SK-N-SH (cell line): ENCODE measurements at regions of chr6 and their contacts with region 1.

Region 1: DNA sequence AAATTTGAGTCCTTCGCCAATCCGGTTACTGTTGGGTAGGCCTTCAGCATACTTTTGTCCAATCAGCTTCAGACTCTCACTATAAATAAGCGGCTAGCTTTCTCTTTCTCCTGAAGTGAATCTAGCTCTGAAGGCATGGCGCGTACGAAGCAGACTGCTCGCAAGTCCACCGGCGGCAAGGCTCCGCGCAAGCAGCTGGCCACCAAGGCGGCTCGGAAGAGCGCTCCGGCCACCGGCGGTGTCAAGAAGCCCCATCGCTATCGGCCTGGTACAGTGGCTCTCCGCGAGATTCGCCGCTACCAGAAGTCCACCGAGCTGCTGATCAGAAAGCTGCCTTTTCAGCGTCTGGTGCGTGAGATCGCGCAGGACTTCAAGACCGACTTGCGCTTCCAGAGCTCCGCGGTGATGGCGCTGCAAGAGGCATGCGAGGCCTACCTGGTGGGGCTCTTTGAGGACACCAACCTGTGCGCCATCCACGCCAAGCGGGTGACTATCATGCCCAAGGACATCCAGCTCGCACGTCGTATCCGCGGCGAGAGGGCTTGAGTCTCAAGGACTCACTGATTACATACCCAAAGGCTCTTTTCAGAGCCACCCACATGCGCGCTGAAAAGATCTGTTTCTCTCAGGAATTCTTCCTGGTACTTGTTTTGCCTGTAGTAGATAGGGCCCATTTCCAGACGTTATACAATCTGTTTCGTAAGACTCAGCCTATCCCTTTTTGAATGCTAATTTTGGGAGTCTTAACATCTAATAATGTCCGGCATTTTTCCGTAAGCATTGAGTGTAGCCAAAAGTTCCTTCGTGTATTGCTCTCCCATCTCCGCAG is 102.0 kb downstream of the OR2B2 start:
- DNase-seq: peak; percentile 74
- H3K4me3 ChIP-seq: peak overlapping the region; percentile 69 to 83
- H3K27ac ChIP-seq: peak overlapping the region; percentile 80 to 99
- H3K4me1 ChIP-seq: peaks cover 3 to 12% of the 10 kb centered on the region in 2 experiments; a peak in 3 of 4 replicates
- H3K27me3 ChIP-seq: no peaks in the 10 kb centered on the region
- CTCF ChIP-seq: peak; percentile 31
- EP300 ChIP-seq: peak in 1 of 2 experiments; percentile 61; a peak in 1 of 4 replicates
- RAD21 ChIP-seq: no peak

Region 2: DNA sequence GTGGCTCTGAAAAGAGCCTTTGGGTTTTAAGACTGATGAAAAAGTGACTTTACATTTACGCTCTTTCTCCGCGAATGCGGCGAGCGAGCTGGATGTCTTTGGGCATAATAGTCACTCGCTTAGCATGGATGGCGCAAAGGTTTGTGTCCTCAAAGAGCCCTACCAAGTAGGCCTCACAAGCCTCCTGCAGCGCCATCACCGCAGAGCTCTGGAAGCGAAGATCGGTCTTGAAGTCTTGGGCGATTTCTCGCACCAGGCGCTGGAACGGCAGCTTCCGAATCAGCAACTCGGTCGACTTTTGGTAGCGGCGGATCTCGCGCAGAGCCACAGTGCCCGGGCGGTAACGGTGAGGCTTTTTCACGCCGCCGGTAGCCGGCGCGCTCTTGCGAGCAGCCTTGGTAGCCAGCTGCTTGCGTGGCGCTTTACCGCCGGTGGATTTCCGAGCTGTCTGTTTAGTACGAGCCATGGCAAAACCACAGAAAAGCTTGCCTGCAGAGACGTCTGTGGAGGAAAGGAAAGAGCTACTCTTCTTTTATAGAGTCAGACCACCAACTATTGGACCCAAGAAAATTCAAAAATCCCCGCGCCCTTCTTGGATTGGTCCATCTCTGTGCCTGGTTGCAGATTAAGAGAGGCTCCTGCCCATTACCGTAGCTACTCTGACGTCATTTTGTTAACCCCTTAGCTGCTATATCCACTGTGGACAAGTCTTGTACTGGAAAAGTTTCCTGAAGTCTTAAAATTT is 1778.4 kb before region 1 on chr6:
- CTCF ChIA-PET with region 1: no interaction called
- POLR2A ChIA-PET with region 1: interaction called, 10 read pairs
- DNase-seq: peak; percentile 89
- H3K4me3 ChIP-seq: peak overlapping the region; percentile 73 to 84
- H3K27ac ChIP-seq: peak overlapping the region; percentile 92 to 99
- H3K4me1 ChIP-seq: peaks cover 10 to 23% of the 10 kb centered on the region in 2 experiments; a peak in 3 of 4 replicates
- H3K27me3 ChIP-seq: no peaks in the 10 kb centered on the region
- CTCF ChIP-seq: peak; percentile 30
- EP300 ChIP-seq: peak; percentile 52 to 61; a peak in 2 of 4 replicates
- RAD21 ChIP-seq: no peak

Region 3: DNA sequence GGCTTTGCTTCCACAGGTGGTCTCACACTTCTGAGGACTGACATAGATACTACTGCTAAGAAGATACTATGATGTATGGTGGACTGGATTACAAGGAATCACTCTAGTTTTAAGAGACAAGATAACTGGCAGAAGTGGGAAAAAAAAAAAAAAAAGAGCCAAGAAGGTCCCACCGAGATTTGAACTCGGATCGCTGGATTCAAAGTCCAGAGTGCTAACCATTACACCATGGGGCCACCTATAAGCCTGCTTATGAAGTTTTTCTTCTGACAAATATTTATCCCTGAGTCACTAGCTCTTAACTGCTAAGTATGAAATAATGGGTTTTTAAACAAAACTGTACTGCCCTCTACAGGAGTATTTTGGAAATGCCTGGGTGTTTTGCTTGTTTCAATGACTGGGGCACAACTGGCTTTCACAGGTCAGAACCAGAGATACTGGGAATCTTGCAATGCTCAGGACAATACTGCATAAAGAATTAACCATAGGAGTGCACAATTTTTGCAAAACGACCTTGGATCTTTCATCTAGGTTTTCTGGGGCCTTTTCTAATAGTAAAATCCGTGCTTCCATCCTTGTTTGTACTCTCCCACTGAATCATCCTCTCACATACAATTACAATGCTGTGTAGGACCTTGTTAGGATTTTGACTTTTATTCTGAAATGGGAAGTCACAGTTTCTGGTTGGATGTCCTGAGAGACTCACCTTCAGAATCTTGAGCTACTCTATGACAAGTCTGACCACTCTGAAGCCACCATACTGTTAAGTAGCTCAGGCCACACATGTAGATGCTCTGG is 14.3 kb before region 1 on chr6:
- CTCF ChIA-PET with region 1: interaction called, 33 read pairs
- POLR2A ChIA-PET with region 1: interaction called, 9 read pairs
- DNase-seq: peak; percentile 53
- H3K4me3 ChIP-seq: no peak overlapping the region; a peak in 1 of 4 replicates
- H3K27ac ChIP-seq: peak overlapping the region in 1 of 2 experiments; percentile 28; a peak in 1 of 4 replicates
- H3K4me1 ChIP-seq: peaks cover 0 to 12% of the 10 kb centered on the region in 2 experiments; a peak in 2 of 4 replicates
- H3K27me3 ChIP-seq: no peaks in the 10 kb centered on the region
- CTCF ChIP-seq: peak; percentile 81
- EP300 ChIP-seq: no peak
- RAD21 ChIP-seq: peak; percentile 68

Region 4: GRCh38 chr6:27838058-27838944 is 28.1 kb after region 1 on chr6:
- CTCF ChIA-PET with region 1: interaction called, 3 read pairs
- POLR2A ChIA-PET with region 1: interaction called, 33 read pairs
- DNase-seq: peak; percentile 84
- H3K4me3 ChIP-seq: peak overlapping the region; percentile 83 to 84
- H3K27ac ChIP-seq: peak overlapping the region; percentile 97 to 99
- H3K4me1 ChIP-seq: peaks cover 0 to 11% of the 10 kb centered on the region in 2 experiments; a peak in 2 of 4 replicates
- H3K27me3 ChIP-seq: no peaks in the 10 kb centered on the region
- CTCF ChIP-seq: no peak
- EP300 ChIP-seq: peak in 1 of 2 experiments; percentile 26; a peak in 1 of 4 replicates
- RAD21 ChIP-seq: no peak

Region 5: DNA sequence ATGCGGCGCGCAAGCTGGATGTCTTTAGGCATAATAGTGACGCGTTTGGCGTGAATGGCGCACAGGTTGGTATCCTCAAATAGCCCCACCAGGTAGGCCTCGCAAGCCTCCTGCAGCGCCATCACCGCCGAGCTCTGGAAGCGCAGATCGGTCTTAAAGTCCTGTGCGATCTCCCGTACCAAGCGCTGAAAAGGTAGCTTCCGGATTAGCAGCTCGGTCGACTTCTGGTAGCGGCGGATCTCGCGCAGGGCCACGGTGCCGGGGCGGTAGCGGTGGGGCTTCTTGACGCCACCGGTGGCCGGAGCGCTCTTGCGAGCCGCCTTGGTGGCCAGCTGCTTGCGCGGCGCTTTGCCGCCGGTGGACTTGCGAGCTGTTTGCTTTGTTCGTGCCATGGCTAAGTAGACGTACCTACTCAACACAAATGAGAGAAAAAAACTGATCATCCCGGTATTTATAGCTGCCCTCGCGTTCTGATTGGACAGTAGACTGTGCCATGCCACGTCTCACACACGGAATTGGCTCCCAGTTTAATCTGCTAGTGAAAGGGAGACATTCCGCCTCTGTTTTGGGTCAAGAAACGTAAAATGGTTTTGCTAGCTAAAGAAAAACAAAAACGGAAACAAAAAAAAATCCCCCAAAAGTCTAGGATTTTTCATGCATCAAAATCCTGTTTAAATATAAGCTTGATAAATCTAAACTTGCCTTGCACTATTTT is 61.9 kb after region 1 on chr6:
- CTCF ChIA-PET with region 1: no interaction called
- POLR2A ChIA-PET with region 1: interaction called, 45 read pairs
- DNase-seq: peak; percentile 91
- H3K4me3 ChIP-seq: peak overlapping the region; percentile 68 to 71
- H3K27ac ChIP-seq: peak overlapping the region; percentile 80 to 97
- H3K4me1 ChIP-seq: peaks cover 0 to 10% of the 10 kb centered on the region in 2 experiments; a peak in 3 of 4 replicates
- H3K27me3 ChIP-seq: no peaks in the 10 kb centered on the region
- CTCF ChIP-seq: peak; percentile 39
- EP300 ChIP-seq: no peak
- RAD21 ChIP-seq: no peak

Region 6: DNA sequence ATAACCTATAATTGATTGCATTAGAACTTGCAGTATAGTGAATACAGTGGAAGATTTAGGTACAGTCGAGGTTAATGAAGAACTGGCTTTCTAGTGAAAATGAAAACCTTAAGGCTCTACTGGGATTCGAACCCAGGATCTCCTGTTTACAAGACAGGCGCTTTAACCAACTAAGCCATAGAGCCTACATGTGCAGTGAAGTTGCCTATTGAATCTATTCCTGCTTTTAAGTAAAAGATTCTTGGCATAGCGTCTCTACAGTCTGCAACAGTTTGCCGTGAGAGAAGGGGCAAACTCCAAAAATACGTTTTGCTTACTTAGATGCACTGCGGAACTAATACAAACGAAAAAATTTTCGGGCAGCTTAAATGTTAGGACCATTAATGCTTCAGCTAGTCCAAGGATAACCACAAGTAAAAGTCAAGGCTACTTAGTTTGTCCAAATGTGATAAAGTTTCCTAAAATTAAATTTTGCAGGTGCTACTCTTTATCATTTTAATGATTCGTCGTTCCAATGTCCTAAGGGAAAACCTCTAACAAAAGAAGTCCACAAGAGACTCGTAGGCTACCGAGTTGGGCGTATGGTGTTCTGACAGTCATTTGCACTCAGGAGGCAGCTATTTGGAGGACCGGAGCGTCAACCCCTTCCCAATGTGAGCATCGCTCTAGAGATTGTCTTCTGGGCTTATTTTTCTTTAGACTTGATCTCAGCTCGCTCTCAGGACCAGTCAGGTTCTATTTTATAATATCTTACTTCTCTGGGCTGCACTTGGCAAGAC is 664.5 kb after region 1 on chr6:
- CTCF ChIA-PET with region 1: no interaction called
- POLR2A ChIA-PET with region 1: no interaction called
- DNase-seq: peak; percentile 39
- H3K4me3 ChIP-seq: peak overlapping the region; percentile 56
- H3K27ac ChIP-seq: no peak overlapping the region
- H3K4me1 ChIP-seq: peaks cover 4 to 8% of the 10 kb centered on the region in 2 experiments; a peak in 1 of 4 replicates
- H3K27me3 ChIP-seq: peaks cover 31% of the 10 kb centered on the region
- CTCF ChIP-seq: no peak
- EP300 ChIP-seq: no peak
- RAD21 ChIP-seq: no peak